Panc1 (cell line): ENCODE measurements at regions of chr12 and their contacts with region 1.

Region 1: GRCh38 chr12:40946612-40947194 is 241.4 kb upstream of the PDZRN4 start:
- DNase-seq: no peak
- ATAC-seq: no peak
- H3K4me3 ChIP-seq: no peak overlapping the region
- H3K27ac ChIP-seq: no peak overlapping the region
- H3K4me1 ChIP-seq: no peaks in the 10 kb centered on the region
- H3K27me3 ChIP-seq: no peaks in the 10 kb centered on the region
- CTCF ChIP-seq: peak; percentile 45; the same call in 1 of the 2 replicates

Region 2: DNA sequence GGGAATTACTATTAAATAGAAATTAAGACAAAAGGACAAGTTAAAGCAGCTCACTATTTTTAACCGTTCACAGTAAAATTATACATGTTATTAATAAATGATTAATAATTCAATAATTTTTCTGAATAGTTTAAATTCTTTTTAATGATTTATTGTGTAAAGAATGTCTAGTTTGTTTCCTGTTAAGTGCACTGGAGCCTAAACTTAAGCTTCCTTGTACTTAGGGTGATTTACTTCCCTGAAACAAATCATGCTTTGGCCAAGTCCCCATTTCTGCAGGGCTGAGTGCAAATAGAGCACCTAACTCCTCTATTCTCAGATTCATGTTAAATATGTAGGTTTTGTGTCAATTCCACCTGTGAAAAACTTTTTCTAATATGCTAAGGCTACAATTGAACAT is 52.5 kb after region 1 on chr12:
- CTCF ChIA-PET with region 1: interaction called, 17 read pairs
- POLR2A ChIA-PET with region 1: no interaction called
- in situ Hi-C with region 1: no loop called
- intact Hi-C with region 1: no loop called
- DNase-seq: no peak
- ATAC-seq: no peak
- H3K4me3 ChIP-seq: no peak overlapping the region
- H3K27ac ChIP-seq: no peak overlapping the region
- H3K4me1 ChIP-seq: no peaks in the 10 kb centered on the region
- H3K27me3 ChIP-seq: no peaks in the 10 kb centered on the region
- CTCF ChIP-seq: no peak

Region 3: GRCh38 chr12:41264281-41264680 is 317.6 kb after region 1 on chr12:
- CTCF ChIA-PET with region 1: no interaction called
- POLR2A ChIA-PET with region 1: no interaction called
- in situ Hi-C with region 1: no loop called
- intact Hi-C with region 1: loop called (anchors 5 kb)
- DNase-seq: no peak
- ATAC-seq: no peak
- H3K4me3 ChIP-seq: no peak overlapping the region
- H3K27ac ChIP-seq: no peak overlapping the region
- H3K4me1 ChIP-seq: no peaks in the 10 kb centered on the region
- H3K27me3 ChIP-seq: no peaks in the 10 kb centered on the region
- CTCF ChIP-seq: peak; percentile 32; the same call in 1 of the 2 replicates